Lower leg skin (tissue), 4 donors: ENCODE measurements at regions of chr9 and their contacts with region 1.

Region 1: DNA sequence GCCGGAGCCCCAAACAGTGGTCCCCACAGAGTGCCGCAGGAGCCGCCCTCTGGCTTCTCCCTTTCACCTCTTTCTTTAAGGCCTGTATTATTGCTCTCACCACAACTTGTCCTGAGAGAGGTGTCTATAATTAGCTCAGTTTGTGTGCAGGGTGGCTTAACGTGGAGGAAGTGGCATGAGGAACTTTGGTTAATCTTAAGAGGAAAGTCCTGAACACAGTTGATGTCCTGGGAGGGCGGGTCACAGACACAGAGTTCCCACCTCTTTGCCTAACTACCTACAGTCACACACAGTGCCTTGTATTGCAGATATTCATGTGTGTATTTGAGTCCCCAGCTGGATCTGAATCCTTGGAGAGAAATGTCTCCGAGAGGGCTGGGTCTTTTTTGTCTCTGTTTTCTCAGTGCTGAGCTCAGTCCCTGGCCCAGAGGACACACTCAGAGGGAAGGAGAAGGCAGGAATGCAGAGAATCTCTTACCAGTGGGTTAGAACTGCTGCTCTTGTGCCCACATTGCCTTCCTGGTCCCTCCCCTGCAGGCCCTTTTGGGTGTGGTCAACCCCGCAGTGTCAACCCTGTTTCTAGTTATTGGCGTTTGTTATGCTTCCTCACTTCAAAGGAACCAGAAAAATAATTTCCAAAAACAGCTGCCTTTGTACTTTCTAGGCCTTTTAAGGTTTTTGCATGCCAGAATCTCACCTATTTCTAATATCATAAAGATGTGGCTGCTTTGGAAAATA is 392.5 kb downstream of the KDM4C start:
- DNase-seq: no peak
- H3K4me3 ChIP-seq: no peak overlapping the region
- CTCF ChIP-seq: no peak
- POLR2A ChIP-seq: no peak

Region 2: DNA sequence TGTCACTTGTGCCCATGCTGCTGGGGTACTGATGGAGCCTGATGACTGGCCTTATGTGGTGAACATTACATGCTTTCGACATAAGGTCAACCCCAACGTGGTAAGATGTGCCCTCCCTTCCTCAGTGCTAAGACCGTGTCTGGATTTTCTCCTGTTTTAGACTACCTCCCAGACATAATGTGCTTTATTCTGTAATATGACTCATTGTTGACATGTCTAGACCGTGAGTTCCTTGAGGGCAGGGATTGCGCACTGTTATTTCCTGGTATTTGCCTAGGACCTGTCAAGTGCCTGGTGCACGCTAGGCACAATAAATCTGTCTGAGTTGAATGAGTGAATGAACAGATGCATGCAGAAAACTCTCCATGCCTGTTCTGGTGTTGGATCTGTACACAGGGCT is 46.6 kb before region 1 on chr9:
- intact Hi-C with region 1: loop called (anchors 2 kb)
- DNase-seq: no peak
- H3K4me3 ChIP-seq: no peak overlapping the region
- CTCF ChIP-seq: no peak
- POLR2A ChIP-seq: no peak